ENCODE measurements at regions of chr15 and their contacts with region 1.

Region 1: DNA sequence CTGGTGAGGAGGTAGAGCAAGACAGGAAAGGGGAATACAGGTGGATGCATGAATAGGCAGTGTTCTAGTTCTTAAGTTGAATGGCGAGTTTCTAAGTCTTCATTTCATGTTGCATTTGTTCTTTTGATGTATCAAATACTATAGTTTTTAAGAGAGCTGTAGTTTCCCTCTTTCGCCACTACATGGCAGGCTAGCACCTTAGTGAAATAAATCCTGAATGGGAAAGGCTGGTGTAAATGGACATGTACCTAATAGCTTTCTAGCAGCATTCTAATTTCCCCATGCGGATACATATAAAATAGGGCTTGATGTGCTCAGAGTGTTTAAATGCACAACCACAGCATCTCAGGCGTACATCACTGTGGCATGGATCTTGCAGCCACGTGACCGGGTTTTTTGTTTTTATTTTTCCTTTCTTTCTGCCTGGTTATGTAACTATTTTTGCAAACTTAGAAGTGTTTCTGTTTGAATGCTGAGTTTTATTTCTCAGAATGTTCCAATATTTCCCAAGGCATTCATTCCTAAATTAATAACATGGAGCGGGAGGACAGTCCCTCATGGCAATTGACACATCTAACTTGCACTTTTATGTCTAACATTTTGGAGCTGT is 23.5 kb upstream of the CLN6 start:
- DNase-seq: no peak
- H3K4me3 ChIP-seq: no peak overlapping the region
- CTCF ChIP-seq: peak; percentile 69

Region 2: DNA sequence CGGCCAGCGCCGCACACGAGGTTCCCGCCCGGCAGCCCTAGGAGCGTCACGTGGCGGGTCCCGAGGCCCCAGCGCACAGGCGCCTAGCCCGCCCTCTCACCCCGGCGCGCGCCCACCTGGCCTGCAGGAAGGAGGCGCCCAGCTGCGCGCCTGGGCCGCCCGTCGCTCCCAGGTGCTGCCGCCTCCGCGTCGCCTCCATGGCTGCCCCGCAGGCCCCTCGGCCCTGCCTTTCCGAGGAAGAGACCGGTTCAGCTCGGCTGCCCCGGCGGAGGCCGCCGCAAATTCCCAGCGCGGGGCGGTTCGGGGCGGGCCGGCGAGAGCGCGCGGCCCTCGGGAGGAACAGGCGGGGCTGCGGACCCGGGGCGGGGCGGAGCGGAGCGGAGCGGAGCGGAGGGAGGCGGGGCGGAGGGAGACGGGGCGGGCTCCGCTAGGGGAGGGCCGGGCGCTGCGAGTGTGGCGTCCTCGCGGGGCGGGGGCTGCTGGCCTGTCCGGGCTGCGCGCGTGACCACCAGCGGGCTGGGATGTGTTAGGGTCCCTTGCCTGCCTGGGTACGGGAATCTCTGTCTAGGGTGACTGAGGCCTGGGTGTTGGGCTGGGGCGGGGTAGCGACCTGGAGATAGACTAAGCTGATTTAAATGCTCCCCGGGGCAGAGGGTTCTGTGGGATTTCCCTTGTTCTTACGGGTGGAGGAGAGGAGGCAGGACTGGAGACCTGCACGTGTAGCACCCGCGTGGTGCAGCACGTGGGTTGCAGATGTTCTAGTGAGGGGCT is 23.5 kb before region 1 on chr15 and contains the start of gene CLN6:
- CTCF ChIA-PET with region 1: interaction called, 27 read pairs
- POLR2A ChIA-PET with region 1: no interaction called
- DNase-seq: peak; percentile 28
- H3K4me3 ChIP-seq: peak within 1 kb of the TSS; percentile 77
- CTCF ChIP-seq: no peak

Region 3: GRCh38 chr15:68265081-68265480 is 12.1 kb after region 1 on chr15:
- CTCF ChIA-PET with region 1: interaction called, 134 read pairs
- POLR2A ChIA-PET with region 1: no interaction called
- DNase-seq: no peak
- H3K4me3 ChIP-seq: no peak overlapping the region
- CTCF ChIP-seq: no peak

Region 4: GRCh38 chr15:68298882-68299381 is 45.9 kb after region 1 on chr15:
- CTCF ChIA-PET with region 1: interaction called, 70 read pairs
- POLR2A ChIA-PET with region 1: interaction called, 3 read pairs
- DNase-seq: no peak
- H3K4me3 ChIP-seq: no peak overlapping the region
- CTCF ChIP-seq: no peak

Region 5: GRCh38 chr15:68924866-68925560 is 672.0 kb after region 1 on chr15:
- CTCF ChIA-PET with region 1: interaction called, 13 read pairs
- POLR2A ChIA-PET with region 1: interaction called, 3 read pairs
- DNase-seq: peak; percentile 10
- H3K4me3 ChIP-seq: no peak overlapping the region
- CTCF ChIP-seq: peak; percentile 88